ENCODE measurements at regions of chr1 and their contacts with region 1.

Region 1: GRCh38 chr1:44696789-44697345 is 22.4 kb downstream of the ARMH1 start:
- DNase-seq: peak; percentile 65
- ATAC-seq: peak; percentile 85
- H3K4me3 Mint-ChIP-seq: peak overlapping the region; percentile 41
- H3K27ac Mint-ChIP-seq: peak overlapping the region; percentile 85
- H3K4me1 Mint-ChIP-seq: peaks cover 37% of the 10 kb centered on the region
- H3K27me3 Mint-ChIP-seq: no peaks in the 10 kb centered on the region
- CTCF ChIP-seq: no peak

Region 2: DNA sequence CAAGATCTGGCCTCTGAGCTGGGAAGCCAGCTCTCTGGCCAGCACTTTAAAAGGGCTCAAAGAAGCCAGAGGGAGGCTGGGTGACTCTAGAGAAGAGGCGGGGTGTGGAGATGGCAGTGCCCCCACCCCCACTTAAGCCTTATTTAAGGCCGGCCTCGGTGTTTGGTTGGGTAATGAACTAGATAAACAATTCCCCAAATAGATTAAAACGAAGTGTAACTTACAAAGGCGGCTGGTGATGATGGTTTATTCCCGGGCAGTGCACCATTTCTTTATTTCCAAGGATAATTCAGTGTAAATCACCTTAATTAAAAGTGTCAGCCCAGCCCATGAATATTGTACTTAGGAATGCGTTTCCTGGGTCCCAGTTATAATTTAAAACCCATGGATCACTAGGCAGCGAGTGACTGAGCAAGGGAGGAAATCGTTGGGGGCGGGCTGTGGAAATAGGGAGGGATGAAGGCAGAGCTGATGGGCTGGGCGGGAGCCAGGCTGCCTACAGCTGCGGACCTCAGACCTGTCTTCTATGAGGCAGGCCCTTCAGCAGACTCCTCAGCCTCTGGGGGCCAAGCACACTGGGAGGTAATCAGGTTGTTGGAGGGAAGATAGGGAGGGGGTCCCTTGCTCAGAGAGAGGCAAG is 77.5 kb before region 1 on chr1:
- CTCF ChIA-PET with region 1: no interaction called
- POLR2A ChIA-PET with region 1: no interaction called
- intact Hi-C with region 1: no loop called
- DNase-seq: no peak
- ATAC-seq: no peak
- H3K4me3 Mint-ChIP-seq: no peak overlapping the region
- H3K27ac Mint-ChIP-seq: no peak overlapping the region
- H3K4me1 Mint-ChIP-seq: no peaks in the 10 kb centered on the region
- H3K27me3 Mint-ChIP-seq: no peaks in the 10 kb centered on the region
- CTCF ChIP-seq: no peak

Region 3: DNA sequence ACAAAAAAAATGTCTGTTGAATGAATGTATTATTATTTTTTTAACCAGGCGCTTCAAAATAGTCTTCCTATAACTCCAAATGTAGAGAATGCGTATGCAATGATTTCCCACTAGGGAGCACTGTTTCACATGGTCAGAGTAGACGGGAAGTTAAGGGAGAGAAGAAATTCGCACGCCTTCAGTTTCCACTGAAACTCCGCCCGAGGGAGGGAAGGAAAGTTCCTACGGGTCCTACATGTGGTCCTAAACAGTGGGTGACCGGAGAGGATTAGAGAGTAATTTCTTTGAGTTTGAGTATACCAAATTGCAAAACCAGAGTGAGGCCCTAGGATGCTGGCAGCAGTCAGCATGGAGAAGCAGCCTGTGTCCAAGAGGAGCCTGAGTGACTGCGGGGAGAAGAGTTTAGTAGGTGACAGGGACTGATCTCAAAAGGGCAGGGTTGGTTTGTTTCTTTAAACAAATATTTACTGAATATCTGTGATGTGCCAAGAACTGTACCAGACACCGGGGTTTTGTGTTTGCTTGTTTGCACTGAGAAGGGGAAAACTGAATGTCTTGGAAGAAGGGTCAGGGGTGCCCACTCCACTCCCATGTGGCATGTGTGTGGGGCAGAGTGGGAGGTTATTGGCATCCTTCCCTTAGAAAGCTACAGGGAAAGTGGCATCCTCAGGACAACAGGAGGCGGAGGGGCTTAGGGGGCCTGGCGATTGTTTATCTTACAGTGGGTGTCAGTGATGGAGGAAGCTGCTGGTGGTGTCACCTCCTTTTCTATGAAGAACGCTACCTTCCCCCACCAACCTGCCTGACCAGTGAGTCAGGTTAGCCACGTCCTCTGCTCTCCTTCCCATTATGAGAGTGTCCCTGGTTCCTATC is 11.3 kb after region 1 on chr1:
- CTCF ChIA-PET with region 1: interaction called, 22 read pairs
- POLR2A ChIA-PET with region 1: interaction called, 3 read pairs
- intact Hi-C with region 1: no loop called
- DNase-seq: peak; percentile 18
- ATAC-seq: peak; percentile 79
- H3K4me3 Mint-ChIP-seq: peak overlapping the region; percentile 42
- H3K27ac Mint-ChIP-seq: peak overlapping the region; percentile 40
- H3K4me1 Mint-ChIP-seq: peaks cover 13% of the 10 kb centered on the region
- H3K27me3 Mint-ChIP-seq: no peaks in the 10 kb centered on the region
- CTCF ChIP-seq: peak; percentile 87

Region 4: DNA sequence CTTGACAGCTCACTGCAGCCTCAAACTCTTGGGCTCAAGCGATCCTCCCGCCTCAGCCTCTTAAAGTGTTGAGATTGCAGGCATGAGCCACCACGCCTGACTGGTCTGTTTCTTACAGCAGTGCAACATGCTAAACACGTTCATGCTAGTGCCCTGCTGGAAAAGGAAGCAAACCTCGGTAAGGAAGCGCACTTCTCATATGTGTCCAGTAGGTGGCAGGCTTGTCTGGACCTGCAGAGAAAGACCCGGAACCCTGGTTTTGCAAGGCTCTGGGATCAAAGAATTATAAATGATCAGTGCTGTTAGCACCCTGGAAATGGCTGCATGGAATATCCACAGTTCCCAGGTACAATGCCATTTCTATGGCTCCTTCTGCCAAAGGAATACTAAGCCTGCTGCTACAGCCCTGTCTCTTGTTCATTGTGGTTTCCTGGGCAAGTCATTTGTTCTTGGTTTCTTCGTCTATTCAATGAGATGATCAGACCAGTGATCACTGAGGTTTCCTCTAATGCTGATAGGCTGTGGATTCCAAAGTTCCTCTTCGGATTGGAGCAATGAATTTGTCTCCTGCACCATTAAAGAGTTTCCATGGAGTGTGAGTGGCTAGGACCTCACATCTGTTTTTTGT is 18.2 kb after region 1 on chr1:
- CTCF ChIA-PET with region 1: interaction called, 20 read pairs
- POLR2A ChIA-PET with region 1: interaction called, 77 read pairs
- intact Hi-C with region 1: no loop called
- DNase-seq: peak; percentile 79
- ATAC-seq: peak; percentile 90
- H3K4me3 Mint-ChIP-seq: peak overlapping the region; percentile 48
- H3K27ac Mint-ChIP-seq: peak overlapping the region; percentile 61
- H3K4me1 Mint-ChIP-seq: peaks cover 44% of the 10 kb centered on the region
- H3K27me3 Mint-ChIP-seq: no peaks in the 10 kb centered on the region
- CTCF ChIP-seq: peak; percentile 99

Measured in activated CD8-positive, alpha-beta T cell treated with anti-CD3 and anti-CD28 coated beads for 36 hours (primary cell).